Activated T-helper 1 cell treated with anti-CD3 and anti-CD28 coated beads, Interleukin-12 subunit alpha, Interleukin-12 subunit beta, Interleukin-2, Interleukin-4 antibody, amounts not matched to agents 30 ng/mL and 10 ng/mL and 1 ng/mL, durations not matched to agents 14 hours and 24 hours and 36 hours (primary cell): ENCODE measurements at regions of chr15 and their contacts with region 1.

Region 1: DNA sequence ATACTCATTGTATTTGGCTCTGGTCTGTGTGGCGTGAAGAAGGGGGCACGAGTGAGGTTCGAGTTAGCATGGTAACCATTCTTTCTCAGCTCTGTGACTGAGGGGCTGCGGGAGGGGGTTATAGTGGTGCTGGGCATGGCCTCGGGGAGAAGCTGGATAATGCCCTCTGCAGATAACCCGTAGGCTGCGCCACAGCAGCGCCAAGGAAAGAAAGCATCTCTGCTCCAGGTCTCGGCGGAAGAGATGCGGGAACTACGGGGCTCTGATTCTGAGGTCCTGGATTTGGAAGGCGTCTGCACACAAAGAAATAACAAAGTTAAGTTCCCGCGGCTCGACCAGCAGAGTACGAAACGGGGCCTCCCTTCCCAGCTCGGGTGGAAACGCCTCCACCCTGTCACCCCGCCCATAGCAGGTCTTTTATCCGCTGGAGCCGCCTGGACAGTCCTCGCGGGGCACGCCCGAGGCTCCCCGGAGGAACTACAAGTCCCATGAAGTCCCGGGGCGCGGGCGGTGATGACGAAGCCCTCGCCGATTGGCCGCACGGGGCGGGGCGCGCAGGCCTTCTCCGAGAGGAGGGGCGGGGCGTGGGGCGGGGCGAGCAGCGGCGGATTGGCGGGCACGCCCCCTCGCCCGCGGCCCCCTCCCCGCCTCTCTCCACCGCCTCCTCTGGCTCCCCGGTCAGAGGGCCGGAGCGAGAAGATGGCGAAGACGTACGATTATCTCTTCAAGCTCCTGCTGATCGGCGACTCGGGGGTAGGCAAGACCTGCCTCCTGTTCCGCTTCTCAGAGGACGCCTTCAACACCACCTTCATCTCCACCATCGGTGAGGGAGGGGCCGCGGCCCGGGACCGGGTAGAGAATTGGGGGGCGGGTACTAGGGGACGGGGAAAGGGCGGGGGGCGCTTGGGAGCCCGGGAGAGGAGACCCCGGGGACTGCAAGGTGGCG is at the start of gene RAB8B:
- DNase-seq: peak; percentile 95
- H3K4me3 Mint-ChIP-seq: peak within 1 kb of the TSS; percentile 96
- H3K27ac Mint-ChIP-seq: peak within 1 kb of the TSS; percentile 92
- H3K4me1 Mint-ChIP-seq: peaks cover 48% of the 10 kb centered on the region
- H3K27me3 Mint-ChIP-seq: peaks cover 10% of the 10 kb centered on the region
- total RNA-seq, gene RAB8B: 135 and 149 TPM in 2 replicates

Region 2: DNA sequence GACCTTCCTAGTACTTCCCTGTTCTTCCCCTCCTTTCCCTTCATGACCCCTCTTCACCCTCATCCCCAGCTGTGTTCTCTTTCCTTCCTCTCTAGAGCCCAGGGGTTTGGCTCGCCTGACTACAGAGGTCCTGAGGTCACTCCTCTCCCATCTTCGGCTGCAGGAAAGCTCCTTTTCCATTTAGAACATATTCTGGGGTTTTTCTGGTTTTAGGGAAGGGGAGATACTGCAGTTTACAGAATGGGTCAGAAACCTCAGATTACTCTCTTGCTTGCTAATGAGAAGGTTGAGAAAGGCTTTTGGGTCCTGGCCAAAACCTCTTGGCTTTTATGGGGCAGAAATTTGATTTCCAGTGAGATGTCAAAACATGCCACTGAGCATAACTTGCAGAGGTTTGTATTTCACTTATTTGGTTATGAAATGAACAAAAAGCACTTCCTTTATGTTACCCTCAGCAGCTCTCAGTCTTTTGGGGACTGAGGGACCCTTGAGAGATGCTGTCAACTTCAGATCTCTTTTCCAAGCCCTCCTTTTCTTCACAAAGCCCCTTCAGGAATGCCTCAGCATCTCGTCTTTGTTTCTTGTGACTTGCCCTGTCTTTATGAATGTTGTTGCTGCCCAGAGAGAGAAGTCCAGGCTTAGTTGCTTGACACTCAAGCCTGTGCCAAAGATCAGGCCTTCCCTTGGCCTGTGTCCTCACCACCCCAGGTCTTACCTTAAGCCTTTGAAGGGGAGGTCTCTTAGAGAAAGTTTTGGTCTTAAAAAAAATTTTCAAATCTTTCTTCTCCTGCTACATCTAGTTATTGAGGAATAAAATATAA is 268.3 kb before region 1 on chr15:
- intact Hi-C with region 1: no loop called
- DNase-seq: no peak
- H3K4me3 Mint-ChIP-seq: no peak overlapping the region
- H3K27ac Mint-ChIP-seq: no peak overlapping the region
- H3K4me1 Mint-ChIP-seq: no peaks in the 10 kb centered on the region
- H3K27me3 Mint-ChIP-seq: peaks cover 21% of the 10 kb centered on the region

Region 3: GRCh38 chr15:63157118-63157843 is 31.9 kb before region 1 on chr15 and contains the start of gene RPS27L:
- intact Hi-C with region 1: loop called (anchors 1 kb)
- DNase-seq: peak; percentile 86
- H3K4me3 Mint-ChIP-seq: peak within 1 kb of the TSS; percentile 98
- H3K27ac Mint-ChIP-seq: peak within 1 kb of the TSS; percentile 98
- H3K4me1 Mint-ChIP-seq: peaks cover 21% of the 10 kb centered on the region
- H3K27me3 Mint-ChIP-seq: no peaks in the 10 kb centered on the region
- total RNA-seq, gene RPS27L: 163 and 164 TPM in 2 replicates

Region 4: DNA sequence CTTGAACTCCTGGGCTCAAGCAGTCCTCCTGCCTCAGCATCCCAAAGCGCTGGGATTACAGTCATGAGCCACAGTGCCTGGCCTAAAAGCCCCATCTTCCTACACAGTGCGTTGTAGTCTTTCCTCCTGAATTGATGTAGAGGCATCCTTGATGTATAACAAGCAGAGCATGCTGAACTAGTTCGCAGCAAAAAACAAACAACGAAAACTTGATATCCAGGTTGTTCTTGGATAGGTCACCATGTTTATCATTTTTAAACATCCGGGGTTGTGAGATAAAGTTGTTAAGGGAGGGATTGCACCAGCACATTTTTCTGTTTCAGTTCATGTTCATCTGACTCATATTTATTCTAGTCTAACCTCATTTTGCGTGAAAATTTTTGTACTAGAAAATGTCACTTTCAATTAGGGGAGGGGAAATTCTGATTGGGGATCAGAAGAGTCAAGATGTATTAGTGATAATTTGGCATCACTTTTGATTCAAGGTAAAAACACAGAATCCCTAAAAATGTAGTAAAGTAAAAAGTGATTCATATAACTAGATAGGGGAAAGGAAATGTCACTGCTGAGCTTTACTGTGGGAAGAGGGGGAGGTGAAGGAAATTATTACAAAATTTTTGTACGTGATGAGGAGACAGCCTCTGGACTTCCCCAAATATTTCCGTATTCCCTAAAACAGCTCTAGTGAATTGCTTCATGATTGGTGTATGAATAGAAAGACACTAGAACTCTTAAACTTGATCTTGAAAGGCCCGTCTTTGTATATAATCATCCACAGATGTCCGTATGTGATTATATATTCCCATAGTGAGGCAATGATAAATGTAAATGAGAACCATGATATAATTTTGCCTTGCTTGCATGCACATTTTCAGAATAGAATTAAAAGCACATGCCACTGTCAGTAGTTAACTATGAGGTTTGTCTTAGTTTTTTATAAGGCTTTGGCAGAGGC is 23.1 kb after region 1 on chr15:
- intact Hi-C with region 1: loop called (anchors 1 kb)
- DNase-seq: no peak
- H3K4me3 Mint-ChIP-seq: peak overlapping the region; percentile 79
- H3K27ac Mint-ChIP-seq: peak overlapping the region; percentile 98
- H3K4me1 Mint-ChIP-seq: peaks cover 68% of the 10 kb centered on the region
- H3K27me3 Mint-ChIP-seq: no peaks in the 10 kb centered on the region

Region 5: DNA sequence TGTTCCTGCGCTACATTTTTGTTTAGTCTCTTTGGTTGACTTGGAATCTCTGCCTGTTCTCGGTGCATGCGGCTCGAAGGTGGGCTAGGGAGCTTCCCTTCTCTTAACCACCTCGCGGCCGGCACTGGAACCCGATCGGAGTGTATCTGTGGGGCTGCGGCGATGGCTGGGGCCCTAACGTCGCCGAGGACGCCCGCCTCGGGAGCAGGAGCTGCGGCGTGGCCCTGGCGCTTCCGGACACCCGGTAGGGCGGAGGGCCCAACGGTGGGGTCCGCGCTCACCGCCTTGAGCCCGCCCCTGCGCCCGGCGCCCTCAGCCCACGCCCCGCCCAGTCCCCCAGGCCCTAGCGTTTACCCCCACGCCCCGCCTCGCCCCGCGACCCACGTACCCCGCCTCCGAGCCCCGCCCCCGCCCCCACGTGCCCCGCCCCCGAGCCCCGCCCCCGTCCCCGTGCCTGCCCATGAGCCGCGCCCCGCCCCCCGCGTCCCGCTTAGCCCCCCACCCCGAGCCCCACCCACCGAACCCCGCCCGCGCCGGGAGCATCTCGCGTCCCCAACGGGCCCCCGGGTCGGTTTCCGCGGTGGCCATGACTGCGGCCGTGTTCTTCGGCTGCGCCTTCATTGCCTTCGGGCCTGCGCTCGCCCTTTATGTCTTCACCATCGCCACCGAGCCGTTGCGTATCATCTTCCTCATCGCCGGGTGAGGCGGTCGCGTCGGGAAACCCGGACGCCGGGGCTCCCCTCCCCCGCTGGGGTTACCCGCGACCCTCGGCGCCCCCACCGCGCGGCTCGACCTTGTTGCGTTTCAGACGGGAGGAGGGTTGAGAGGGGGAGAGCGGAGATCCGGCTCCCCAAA is 88.1 kb after region 1 on chr15 and contains the start of gene APH1B:
- intact Hi-C with region 1: loop called (anchors 1 kb)
- DNase-seq: peak; percentile 80
- H3K4me3 Mint-ChIP-seq: peak within 1 kb of the TSS; percentile 89
- H3K27ac Mint-ChIP-seq: peak within 1 kb of the TSS; percentile 92
- H3K4me1 Mint-ChIP-seq: peaks cover 37% of the 10 kb centered on the region
- H3K27me3 Mint-ChIP-seq: no peaks in the 10 kb centered on the region
- total RNA-seq, gene APH1B: 4.1 and 6.2 TPM in 2 replicates

Region 6: GRCh38 chr15:63504247-63504978 is 315.2 kb after region 1 on chr15 and contains the start of gene USP3:
- intact Hi-C with region 1: loop called (anchors 1 kb)
- DNase-seq: peak; percentile 91
- H3K4me3 Mint-ChIP-seq: peak within 1 kb of the TSS; percentile 93
- H3K27ac Mint-ChIP-seq: peak within 1 kb of the TSS; percentile 93
- H3K4me1 Mint-ChIP-seq: peaks cover 83% of the 10 kb centered on the region
- H3K27me3 Mint-ChIP-seq: no peaks in the 10 kb centered on the region
- total RNA-seq, gene USP3: 46.9 and 58.9 TPM in 2 replicates